ENCODE measurements at regions of chr2 and their contacts with region 1.

Region 1: GRCh38 chr2:71100195-71100964 is 29.6 kb downstream of the MCEE start:
- DNase-seq: peak; percentile 49
- ATAC-seq: peak; percentile 49
- H3K4me3 ChIP-seq: no peak overlapping the region
- H3K4me3 Mint-ChIP-seq: no peak overlapping the region
- H3K27ac ChIP-seq: no peak overlapping the region
- H3K27ac Mint-ChIP-seq: no peak overlapping the region
- H3K4me1 ChIP-seq: no peaks in the 10 kb centered on the region
- H3K4me1 Mint-ChIP-seq: no peaks in the 10 kb centered on the region
- H3K27me3 ChIP-seq: peaks cover 0 to 2% (median 1%) of the 10 kb centered on the region in 4 experiments
- H3K27me3 Mint-ChIP-seq: peaks cover 5% of the 10 kb centered on the region
- CTCF ChIP-seq: peak; percentile 73

Region 2: GRCh38 chr2:70280242-70280798 is 820.1 kb before region 1 on chr2:
- CTCF ChIA-PET with region 1: no interaction called
- POLR2A ChIA-PET with region 1: no interaction called
- intact Hi-C with region 1: no loop called
- DNase-seq: no peak
- ATAC-seq: no peak
- H3K4me3 ChIP-seq: no peak overlapping the region
- H3K4me3 Mint-ChIP-seq: no peak overlapping the region
- H3K27ac ChIP-seq: no peak overlapping the region
- H3K27ac Mint-ChIP-seq: peak overlapping the region; percentile 26
- H3K4me1 ChIP-seq: no peaks in the 10 kb centered on the region
- H3K4me1 Mint-ChIP-seq: peaks cover 11% of the 10 kb centered on the region
- H3K27me3 ChIP-seq: no peaks in the 10 kb centered on the region
- H3K27me3 Mint-ChIP-seq: no peaks in the 10 kb centered on the region
- CTCF ChIP-seq: no peak

Region 3: DNA sequence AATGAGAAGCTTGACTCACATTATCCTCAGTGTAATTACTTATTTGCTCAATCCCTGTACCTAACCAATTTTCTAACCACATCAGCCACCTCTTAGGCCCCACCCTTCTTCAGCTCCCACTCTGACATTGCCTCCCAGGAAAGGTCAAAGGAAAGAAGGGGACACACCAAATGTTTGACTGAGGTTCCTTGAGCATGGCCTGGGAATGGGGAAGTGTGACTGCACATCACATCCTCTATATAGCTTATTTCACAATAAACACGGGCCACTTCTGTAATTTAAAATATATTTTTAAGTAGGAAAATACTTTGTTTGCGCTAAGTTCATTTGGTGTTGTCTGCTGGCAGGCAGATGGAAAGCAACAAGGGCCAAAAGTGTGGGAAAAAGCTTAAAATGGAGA is 306.9 kb before region 1 on chr2:
- CTCF ChIA-PET with region 1: no interaction called
- POLR2A ChIA-PET with region 1: no interaction called
- intact Hi-C with region 1: no loop called
- DNase-seq: no peak
- ATAC-seq: no peak
- H3K4me3 ChIP-seq: no peak overlapping the region
- H3K4me3 Mint-ChIP-seq: no peak overlapping the region
- H3K27ac ChIP-seq: no peak overlapping the region
- H3K27ac Mint-ChIP-seq: no peak overlapping the region
- H3K4me1 ChIP-seq: peaks cover 11 to 15% of the 10 kb centered on the region in 2 donors
- H3K4me1 Mint-ChIP-seq: peaks cover 7% of the 10 kb centered on the region
- H3K27me3 ChIP-seq: peaks cover 0 to 42% (median 16%) of the 10 kb centered on the region in 4 experiments
- H3K27me3 Mint-ChIP-seq: peaks cover 51% of the 10 kb centered on the region
- CTCF ChIP-seq: no peak

Region 4: GRCh38 chr2:70977605-70978205 is 122.7 kb before region 1 on chr2:
- CTCF ChIA-PET with region 1: no interaction called
- POLR2A ChIA-PET with region 1: no interaction called
- intact Hi-C with region 1: no loop called
- DNase-seq: peak; percentile 57
- ATAC-seq: no peak
- H3K4me3 ChIP-seq: peak overlapping the region; percentile 52 to 84 (median 64)
- H3K4me3 Mint-ChIP-seq: peak overlapping the region; percentile 95
- H3K27ac ChIP-seq: peak overlapping the region; percentile 43 to 79
- H3K27ac Mint-ChIP-seq: peak overlapping the region; percentile 93
- H3K4me1 ChIP-seq: peaks cover 16 to 22% of the 10 kb centered on the region in 2 donors
- H3K4me1 Mint-ChIP-seq: peaks cover 22% of the 10 kb centered on the region
- H3K27me3 ChIP-seq: no peaks in the 10 kb centered on the region
- H3K27me3 Mint-ChIP-seq: peaks cover 15% of the 10 kb centered on the region
- CTCF ChIP-seq: no peak

Region 5: DNA sequence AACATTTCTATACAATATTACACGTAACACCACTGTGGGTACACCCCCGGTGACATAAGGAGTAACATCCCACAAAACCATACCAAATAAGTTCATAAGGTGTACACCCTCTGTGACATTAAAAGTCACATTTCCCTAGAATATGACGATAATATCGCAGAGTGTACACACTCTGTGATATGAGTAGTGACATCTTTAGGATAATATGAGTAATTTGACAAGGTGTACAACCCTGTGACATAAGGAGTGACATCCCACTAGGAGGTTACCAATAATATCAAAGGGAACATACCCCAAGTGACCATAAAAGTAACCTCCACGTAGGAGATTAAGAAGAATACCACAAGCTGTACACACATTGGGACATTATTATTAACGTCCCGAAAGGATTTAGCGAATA is 81.8 kb before region 1 on chr2:
- CTCF ChIA-PET with region 1: interaction called, 10 read pairs
- POLR2A ChIA-PET with region 1: no interaction called
- intact Hi-C with region 1: no loop called
- DNase-seq: no peak
- ATAC-seq: no peak
- H3K4me3 ChIP-seq: no peak overlapping the region
- H3K4me3 Mint-ChIP-seq: no peak overlapping the region
- H3K27ac ChIP-seq: no peak overlapping the region
- H3K27ac Mint-ChIP-seq: no peak overlapping the region
- H3K4me1 ChIP-seq: peaks cover 0 to under 1% of the 10 kb centered on the region in 2 donors
- H3K4me1 Mint-ChIP-seq: peaks cover 5% of the 10 kb centered on the region
- H3K27me3 ChIP-seq: peaks cover 0 to 2% (median 0%) of the 10 kb centered on the region in 4 experiments
- H3K27me3 Mint-ChIP-seq: peaks cover 4% of the 10 kb centered on the region
- CTCF ChIP-seq: no peak

Region 6: GRCh38 chr2:71049365-71050360 is 50.7 kb before region 1 on chr2:
- CTCF ChIA-PET with region 1: interaction called, 16 read pairs
- POLR2A ChIA-PET with region 1: no interaction called
- intact Hi-C with region 1: loop called (anchors 1 kb)
- DNase-seq: peak; percentile 67
- ATAC-seq: peak; percentile 47
- H3K4me3 ChIP-seq: no peak overlapping the region
- H3K4me3 Mint-ChIP-seq: no peak overlapping the region
- H3K27ac ChIP-seq: no peak overlapping the region
- H3K27ac Mint-ChIP-seq: no peak overlapping the region
- H3K4me1 ChIP-seq: peaks cover 0 to 3% of the 10 kb centered on the region in 2 donors
- H3K4me1 Mint-ChIP-seq: peaks cover 3% of the 10 kb centered on the region
- H3K27me3 ChIP-seq: peaks cover 0 to 3% (median 0%) of the 10 kb centered on the region in 4 experiments
- H3K27me3 Mint-ChIP-seq: peaks cover 6% of the 10 kb centered on the region
- CTCF ChIP-seq: peak; percentile 38

Region 7: DNA sequence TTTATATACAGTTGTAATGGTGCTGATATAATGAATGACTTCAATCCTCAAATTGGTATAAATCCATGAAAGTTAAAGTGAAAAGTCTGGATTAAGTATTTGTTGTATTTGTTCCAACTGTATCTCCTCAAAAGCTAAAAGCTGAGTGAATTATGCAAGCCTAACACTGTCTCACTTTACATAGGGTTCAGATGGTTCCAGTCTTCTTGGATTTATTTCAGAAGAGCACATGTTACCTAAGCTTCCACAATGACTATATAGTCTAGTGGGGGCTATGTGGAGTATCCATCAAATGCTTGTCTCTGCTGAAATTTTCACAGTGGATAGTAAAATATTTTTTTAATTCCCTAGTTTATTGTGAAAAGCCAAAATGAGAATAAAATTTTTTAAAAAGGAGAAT is 16.7 kb after region 1 on chr2:
- CTCF ChIA-PET with region 1: interaction called, 21 read pairs
- POLR2A ChIA-PET with region 1: no interaction called
- intact Hi-C with region 1: no loop called
- DNase-seq: no peak
- ATAC-seq: no peak
- H3K4me3 ChIP-seq: no peak overlapping the region
- H3K4me3 Mint-ChIP-seq: no peak overlapping the region
- H3K27ac ChIP-seq: no peak overlapping the region
- H3K27ac Mint-ChIP-seq: no peak overlapping the region
- H3K4me1 ChIP-seq: no peaks in the 10 kb centered on the region
- H3K4me1 Mint-ChIP-seq: no peaks in the 10 kb centered on the region
- H3K27me3 ChIP-seq: no peaks in the 10 kb centered on the region
- H3K27me3 Mint-ChIP-seq: no peaks in the 10 kb centered on the region
- CTCF ChIP-seq: no peak

Region 8: GRCh38 chr2:71505086-71505769 is 404.8 kb after region 1 on chr2:
- CTCF ChIA-PET with region 1: no interaction called
- POLR2A ChIA-PET with region 1: no interaction called
- intact Hi-C with region 1: no loop called
- DNase-seq: no peak
- ATAC-seq: no peak
- H3K4me3 ChIP-seq: no peak overlapping the region
- H3K4me3 Mint-ChIP-seq: no peak overlapping the region
- H3K27ac ChIP-seq: no peak overlapping the region
- H3K27ac Mint-ChIP-seq: no peak overlapping the region
- H3K4me1 ChIP-seq: no peaks in the 10 kb centered on the region
- H3K4me1 Mint-ChIP-seq: peaks cover 2% of the 10 kb centered on the region
- H3K27me3 ChIP-seq: no peaks in the 10 kb centered on the region
- H3K27me3 Mint-ChIP-seq: peaks cover 12% of the 10 kb centered on the region
- CTCF ChIP-seq: no peak